PC-3 (cell line): ENCODE measurements at regions of chr3 and their contacts with region 1.

Region 1: GRCh38 chr3:130276203-130276803 is 69.2 kb upstream of the COL6A5 start:
- DNase-seq: peak; percentile 65
- ATAC-seq: peak; percentile 71
- H3K4me3 ChIP-seq: no peak overlapping the region
- H3K27ac ChIP-seq: no peak overlapping the region
- H3K4me1 ChIP-seq: no peaks in the 10 kb centered on the region
- H3K27me3 ChIP-seq: peaks cover 31% of the 10 kb centered on the region
- CTCF ChIP-seq: peak; percentile 83

Region 2: DNA sequence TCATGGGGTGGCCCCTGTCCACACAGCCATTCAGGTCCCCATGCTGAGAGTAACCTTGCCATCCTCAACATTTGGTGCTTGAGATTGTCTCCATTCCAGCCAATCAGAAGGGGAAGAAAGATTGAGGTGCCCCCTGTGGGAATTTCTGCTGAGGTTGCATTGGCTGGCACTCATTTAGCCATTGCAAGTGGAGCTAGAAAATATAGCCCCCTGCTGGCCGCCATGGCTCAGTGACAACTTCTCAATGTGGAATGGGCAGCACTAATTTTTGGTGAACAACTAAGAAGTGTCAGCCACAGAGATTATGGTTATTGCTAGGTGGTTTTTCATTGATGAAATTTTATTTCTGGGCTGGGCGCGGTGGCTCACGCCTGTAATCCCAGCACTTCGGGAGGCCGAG is 262.7 kb after region 1 on chr3:
- CTCF ChIA-PET with region 1: no interaction called
- POLR2A ChIA-PET with region 1: no interaction called
- intact Hi-C with region 1: loop called (anchors 1 kb)
- DNase-seq: peak; percentile 54
- ATAC-seq: peak; percentile 69
- H3K4me3 ChIP-seq: no peak overlapping the region
- H3K27ac ChIP-seq: no peak overlapping the region
- H3K4me1 ChIP-seq: no peaks in the 10 kb centered on the region
- H3K27me3 ChIP-seq: peaks cover 12% of the 10 kb centered on the region
- CTCF ChIP-seq: peak; percentile 74